ENCODE measurements at regions of chr19 and their contacts with region 1.

Region 1: GRCh38 chr19:39502640-39503417 is 4.1 kb downstream of the DLL3 start:
- DNase-seq: peak; percentile 94 to 97
- ATAC-seq: peak in 1 of 2 experiments; percentile 39; a peak in 4 of 6 replicates
- H3K4me3 ChIP-seq: peak overlapping the region; percentile 16; the same call in 1 of the 3 replicates
- H3K27ac ChIP-seq: peak overlapping the region; percentile 6 to 57; a peak in 2 of 6 replicates
- H3K4me1 ChIP-seq: peaks cover 25% of the 10 kb centered on the region
- CTCF ChIP-seq: peak; percentile 99
- EP300 ChIP-seq: no peak
- POLR2A ChIP-seq: no peak
- RAD21 ChIP-seq: peak in 1 of 2 experiments; percentile 58; a peak in 4 of 5 replicates

Region 2: DNA sequence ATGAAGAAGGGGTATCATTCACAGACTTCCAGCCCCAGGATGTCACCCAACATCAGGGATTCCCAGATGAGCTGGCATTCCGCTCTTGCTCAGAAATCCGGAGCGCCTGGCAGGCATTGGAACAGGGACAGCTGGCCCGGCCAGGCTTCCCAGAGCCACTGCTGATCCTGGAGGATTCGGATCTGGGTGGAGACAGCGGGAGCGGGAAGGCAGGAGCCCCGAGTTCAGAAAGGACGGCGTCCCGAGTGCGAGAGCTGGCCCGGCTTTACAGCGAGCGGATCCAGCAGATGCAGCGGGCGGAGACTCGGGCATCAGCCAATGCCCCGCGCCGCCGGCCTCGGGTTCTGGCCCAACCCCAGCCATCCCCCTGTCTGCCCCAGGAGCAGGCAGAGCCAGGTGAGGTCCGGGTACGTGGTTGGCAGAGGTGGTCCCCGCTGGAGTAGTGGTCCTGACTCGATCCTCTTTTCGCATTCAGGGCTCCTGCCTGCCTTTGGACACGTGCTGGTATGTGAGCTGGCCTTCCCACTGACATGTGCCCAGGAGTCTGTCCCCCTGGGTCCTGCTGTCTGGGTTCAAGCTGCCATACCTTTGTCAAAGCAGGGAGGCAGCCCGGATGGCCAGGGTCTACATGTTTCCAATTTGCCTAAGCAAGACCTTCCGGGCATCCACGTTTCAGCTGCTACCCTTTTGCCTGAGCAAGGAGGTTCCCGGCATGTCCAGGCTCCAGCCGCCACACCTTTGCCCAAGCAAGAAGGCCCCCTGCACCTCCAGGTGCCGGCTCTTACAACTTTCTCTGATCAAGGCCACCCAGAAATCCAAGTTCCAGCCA is 79.4 kb before region 1 on chr19:
- CTCF ChIA-PET with region 1: interaction called, 11 read pairs
- POLR2A ChIA-PET with region 1: no interaction called
- DNase-seq: no peak
- ATAC-seq: 0 out of 6 replicates have a peak, but pooled peaks of 1 of the 2 experiments have one; percentile 1
- H3K4me3 ChIP-seq: no peak overlapping the region
- H3K27ac ChIP-seq: no peak overlapping the region
- H3K4me1 ChIP-seq: peaks cover 12% of the 10 kb centered on the region
- CTCF ChIP-seq: no peak
- EP300 ChIP-seq: no peak
- POLR2A ChIP-seq: no peak
- RAD21 ChIP-seq: no peak

Region 3: DNA sequence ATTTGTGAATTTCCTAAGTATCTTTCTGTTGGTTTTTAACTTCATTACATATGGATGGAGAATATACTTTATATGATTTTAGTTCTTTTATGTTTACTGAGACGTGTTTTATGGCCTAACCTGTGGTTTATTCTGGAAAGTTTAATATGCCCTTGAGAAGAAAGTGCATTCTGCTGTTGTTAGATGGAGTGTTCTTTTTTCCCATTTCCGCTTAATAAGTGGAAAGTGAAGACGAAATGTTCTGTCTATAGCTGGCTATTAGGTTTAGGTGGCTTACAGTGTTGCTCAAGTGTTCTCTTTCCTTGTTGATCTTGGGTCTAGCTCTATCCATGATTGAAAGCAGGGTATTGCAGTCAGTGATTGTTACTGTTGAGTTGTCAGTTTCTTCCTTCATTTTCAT is 39.4 kb before region 1 on chr19:
- CTCF ChIA-PET with region 1: interaction called, 305 read pairs
- POLR2A ChIA-PET with region 1: no interaction called
- DNase-seq: no peak
- ATAC-seq: no peak
- H3K4me3 ChIP-seq: no peak overlapping the region
- H3K27ac ChIP-seq: no peak overlapping the region
- H3K4me1 ChIP-seq: peaks cover 5% of the 10 kb centered on the region
- CTCF ChIP-seq: no peak
- EP300 ChIP-seq: no peak
- POLR2A ChIP-seq: no peak
- RAD21 ChIP-seq: no peak

Region 4: GRCh38 chr19:39480337-39481228 is 22.2 kb before region 1 on chr19 and contains the start of gene TIMM50:
- CTCF ChIA-PET with region 1: interaction called, 305 read pairs
- POLR2A ChIA-PET with region 1: interaction called, 11 read pairs
- DNase-seq: peak; percentile 97
- ATAC-seq: peak; percentile 91 to 96
- H3K4me3 ChIP-seq: peak within 1 kb of the TSS; percentile 70
- H3K27ac ChIP-seq: peak within 1 kb of the TSS; percentile 86 to 92
- H3K4me1 ChIP-seq: peaks cover 15% of the 10 kb centered on the region
- CTCF ChIP-seq: no peak
- EP300 ChIP-seq: no peak
- POLR2A ChIP-seq: peak; percentile 93
- RAD21 ChIP-seq: no peak
- polyA plus RNA-seq, gene TIMM50: 234 and 246 TPM in 2 replicates

Region 5: GRCh38 chr19:39524495-39524894 is 21.7 kb after region 1 on chr19:
- CTCF ChIA-PET with region 1: interaction called, 259 read pairs
- POLR2A ChIA-PET with region 1: no interaction called
- DNase-seq: no peak
- ATAC-seq: no peak; a peak in 1 of 6 replicates
- H3K4me3 ChIP-seq: no peak overlapping the region
- H3K27ac ChIP-seq: no peak overlapping the region
- H3K4me1 ChIP-seq: peaks cover 5% of the 10 kb centered on the region; the same call in 2 of the 3 replicates
- CTCF ChIP-seq: no peak
- EP300 ChIP-seq: no peak
- POLR2A ChIP-seq: no peak
- RAD21 ChIP-seq: no peak

Region 6: GRCh38 chr19:39599116-39599515 is 96.3 kb after region 1 on chr19:
- CTCF ChIA-PET with region 1: no interaction called
- POLR2A ChIA-PET with region 1: no interaction called
- DNase-seq: peak in 1 of 2 experiments; percentile 26
- ATAC-seq: no peak
- H3K4me3 ChIP-seq: no peak overlapping the region
- H3K27ac ChIP-seq: no peak overlapping the region
- H3K4me1 ChIP-seq: no peaks in the 10 kb centered on the region
- CTCF ChIP-seq: no peak
- EP300 ChIP-seq: no peak
- POLR2A ChIP-seq: no peak
- RAD21 ChIP-seq: no peak